ENCODE measurements at regions of chr3 and their contacts with region 1.

Region 1: GRCh38 chr3:137032465-137033120 is 74.8 kb downstream of the IL20RB start:
- DNase-seq: peak; percentile 79
- ATAC-seq: peak; percentile 91
- H3K4me3 ChIP-seq: peak overlapping the region; percentile 13 to 17; a peak in 3 of 4 replicates
- H3K27ac ChIP-seq: no peak overlapping the region
- H3K4me1 ChIP-seq: peaks cover 6% of the 10 kb centered on the region; the same call in 1 of the 2 replicates
- H3K27me3 ChIP-seq: peaks cover 8% of the 10 kb centered on the region; the same call in 1 of the 2 replicates
- CTCF ChIP-seq: peak; percentile 97

Region 2: DNA sequence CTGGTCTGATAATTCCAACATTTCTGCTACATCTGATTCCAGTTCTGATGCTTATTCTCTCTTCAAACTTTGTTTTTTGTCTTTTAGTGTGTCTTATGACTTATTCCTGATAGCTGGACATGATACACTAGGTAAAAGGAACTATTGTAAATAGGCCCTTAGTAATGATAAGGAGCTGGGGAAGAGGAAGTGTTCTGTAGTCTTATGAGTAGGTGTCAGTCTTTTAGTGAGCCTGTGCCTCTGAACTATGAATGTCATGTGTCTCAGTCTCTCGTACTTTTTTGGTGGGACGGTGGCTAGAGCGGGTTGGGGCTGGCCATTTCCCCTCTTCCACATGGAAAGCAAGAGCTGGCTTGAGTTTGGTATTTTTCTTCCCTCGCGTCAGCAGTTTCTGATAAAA is 741.3 kb before region 1 on chr3:
- CTCF ChIA-PET with region 1: interaction called, 11 read pairs
- POLR2A ChIA-PET with region 1: no interaction called
- in situ Hi-C with region 1: no loop called
- intact Hi-C with region 1: no loop called
- DNase-seq: no peak
- ATAC-seq: no peak
- H3K4me3 ChIP-seq: no peak overlapping the region
- H3K27ac ChIP-seq: no peak overlapping the region
- H3K4me1 ChIP-seq: no peaks in the 10 kb centered on the region
- H3K27me3 ChIP-seq: no peaks in the 10 kb centered on the region
- CTCF ChIP-seq: no peak

Region 3: GRCh38 chr3:137243001-137243400 is 210.4 kb after region 1 on chr3:
- CTCF ChIA-PET with region 1: no interaction called
- POLR2A ChIA-PET with region 1: no interaction called
- in situ Hi-C with region 1: no loop called
- intact Hi-C with region 1: no loop called
- DNase-seq: no peak
- ATAC-seq: no peak
- H3K4me3 ChIP-seq: no peak overlapping the region
- H3K27ac ChIP-seq: no peak overlapping the region
- H3K4me1 ChIP-seq: no peaks in the 10 kb centered on the region
- H3K27me3 ChIP-seq: no peaks in the 10 kb centered on the region
- CTCF ChIP-seq: no peak

Region 4: DNA sequence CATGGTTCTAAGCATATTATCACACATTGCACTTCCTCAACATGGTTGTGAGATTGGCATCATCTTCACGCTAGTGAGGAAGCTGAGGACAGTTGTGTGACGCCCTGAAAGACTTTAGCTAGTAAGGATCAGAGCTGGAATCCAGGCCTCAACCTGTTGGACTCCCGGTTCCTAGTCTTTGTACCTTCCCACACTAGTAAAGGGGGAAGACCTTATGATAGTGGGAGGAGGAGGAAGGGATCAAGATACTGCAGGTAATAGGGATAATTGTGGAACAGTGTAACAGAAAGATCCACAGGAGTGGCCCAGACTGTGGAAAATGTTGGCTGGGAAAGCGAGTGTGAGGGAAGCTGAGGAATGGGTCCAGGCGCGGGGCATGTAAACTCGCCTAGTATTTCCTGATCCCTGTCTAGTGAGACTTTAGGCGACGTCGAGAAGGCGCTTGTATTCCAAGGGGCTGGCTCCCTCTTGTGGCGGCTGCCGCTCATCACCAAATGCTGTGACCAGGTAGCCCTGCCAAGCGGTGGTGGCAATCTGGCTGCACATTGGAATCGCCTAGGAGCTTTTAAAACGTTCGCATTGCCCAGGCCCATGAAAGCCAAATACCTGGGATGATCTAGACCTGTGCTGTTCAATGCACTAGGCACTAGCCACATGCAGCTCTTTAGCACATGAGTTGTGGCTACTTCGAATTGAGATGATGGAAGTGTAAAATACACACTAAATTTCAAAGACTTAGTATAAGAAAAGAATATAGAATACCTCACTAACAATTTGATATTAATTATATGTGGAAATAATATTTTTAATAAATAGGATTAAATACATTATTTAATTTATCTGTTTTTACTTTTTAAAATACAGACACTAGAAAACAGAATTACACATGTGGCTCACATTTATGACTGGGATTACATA is 938.6 kb after region 1 on chr3:
- CTCF ChIA-PET with region 1: no interaction called
- POLR2A ChIA-PET with region 1: no interaction called
- in situ Hi-C with region 1: no loop called
- intact Hi-C with region 1: loop called (anchors 10 kb)
- DNase-seq: no peak
- ATAC-seq: peak; percentile 100
- H3K4me3 ChIP-seq: no peak overlapping the region
- H3K27ac ChIP-seq: no peak overlapping the region
- H3K4me1 ChIP-seq: peaks cover 2% of the 10 kb centered on the region; the same call in 1 of the 2 replicates
- H3K27me3 ChIP-seq: peaks cover 6% of the 10 kb centered on the region; the same call in 1 of the 2 replicates
- CTCF ChIP-seq: peak; percentile 97

Region 5: GRCh38 chr3:138768125-138768524 is 1735.5 kb after region 1 on chr3:
- CTCF ChIA-PET with region 1: no interaction called
- POLR2A ChIA-PET with region 1: no interaction called
- in situ Hi-C with region 1: no loop called
- intact Hi-C with region 1: no loop called
- DNase-seq: no peak
- ATAC-seq: no peak; the same call in 1 of the 2 replicates
- H3K4me3 ChIP-seq: no peak overlapping the region
- H3K27ac ChIP-seq: no peak overlapping the region
- H3K4me1 ChIP-seq: no peaks in the 10 kb centered on the region
- H3K27me3 ChIP-seq: no peaks in the 10 kb centered on the region
- CTCF ChIP-seq: no peak